ENCODE measurements at regions of chr2 and their contacts with region 1.

Region 1: DNA sequence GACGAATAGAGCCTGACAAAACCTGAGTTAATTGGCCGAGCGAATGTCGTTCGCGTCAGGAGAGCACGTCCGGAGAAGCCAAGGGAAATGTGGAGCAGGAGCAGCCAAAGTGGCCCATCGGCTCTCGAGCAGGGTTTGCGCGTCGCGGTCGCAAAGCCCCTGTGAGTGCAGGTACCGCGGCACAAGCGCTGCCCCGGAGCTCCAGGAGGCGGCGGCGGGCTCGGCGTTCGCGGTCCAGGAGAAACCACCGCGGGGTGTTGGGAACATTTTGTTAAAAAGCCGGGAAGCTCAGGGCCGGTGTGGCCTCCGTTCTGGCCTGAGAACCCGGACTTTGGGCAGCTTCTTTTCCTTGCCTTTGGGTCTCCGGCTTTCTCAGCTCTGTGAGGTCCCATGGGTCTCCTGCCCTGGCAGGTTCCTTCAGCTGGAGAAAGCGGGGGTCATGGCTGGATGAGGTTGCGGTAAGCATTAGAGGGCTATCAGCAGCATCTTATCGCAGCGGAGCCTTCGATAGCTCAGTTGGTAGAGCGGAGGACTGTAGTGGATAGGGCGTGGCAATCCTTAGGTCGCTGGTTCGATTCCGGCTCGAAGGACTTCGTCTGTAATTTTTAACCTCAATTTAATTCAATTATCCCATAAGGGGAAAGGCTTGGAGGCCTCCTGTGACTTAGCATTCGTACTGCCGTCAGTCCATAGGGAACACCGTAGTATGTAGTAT is 1.0 kb upstream of the AGBL5 start:
- DNase-seq: peak; percentile 93
- H3K4me3 ChIP-seq: peak overlapping the region; percentile 86 to 89
- H3K27ac ChIP-seq: peak overlapping the region; percentile 81 to 98
- H3K4me1 ChIP-seq: peaks cover 10 to 15% of the 10 kb centered on the region in 2 experiments; a peak in 2 of 4 replicates
- H3K27me3 ChIP-seq: no peaks in the 10 kb centered on the region
- CTCF ChIP-seq: peak; percentile 47
- EP300 ChIP-seq: peak in 1 of 2 experiments; percentile 76; a peak in 2 of 4 replicates
- RAD21 ChIP-seq: no peak; the same call in 1 of the 2 replicates

Region 2: DNA sequence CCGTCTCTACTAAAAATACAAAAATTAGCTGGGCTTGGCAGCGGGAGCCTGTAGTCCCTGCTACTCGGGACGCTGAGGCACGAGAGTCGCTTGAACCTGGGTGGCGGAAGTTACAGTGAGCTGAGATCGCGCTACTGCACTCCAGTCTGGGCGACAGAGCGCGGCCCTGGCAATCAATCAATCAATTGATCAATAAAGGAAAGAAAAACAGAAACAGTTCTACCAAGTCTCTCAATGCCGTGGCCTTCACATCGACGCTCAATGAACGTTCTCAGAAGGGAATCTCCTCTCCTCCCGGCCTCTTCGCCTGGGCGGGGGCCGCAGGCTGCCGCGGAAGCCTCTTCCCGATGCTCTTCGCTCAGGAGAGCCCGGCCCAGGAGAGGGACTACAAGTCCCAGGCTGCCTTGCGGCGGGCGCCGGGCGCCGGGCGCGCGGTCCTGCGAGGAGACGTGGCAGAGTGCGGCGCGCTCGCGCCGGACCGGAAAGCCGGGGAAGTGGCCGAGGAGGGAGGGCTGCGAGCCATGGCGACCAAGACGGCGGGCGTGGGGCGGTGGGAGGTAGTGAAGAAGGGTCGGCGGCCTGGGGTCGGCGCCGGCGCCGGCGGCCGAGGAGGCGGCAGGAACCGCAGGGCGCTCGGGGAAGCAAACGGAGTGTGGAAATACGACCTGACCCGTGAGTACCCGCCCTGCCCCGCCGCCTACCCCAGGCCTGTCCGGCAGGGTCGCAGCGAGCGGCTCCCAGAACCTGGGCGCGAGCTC is 17.8 kb before region 1 on chr2 and contains the start of gene TMEM214:
- CTCF ChIA-PET with region 1: interaction called, 6 read pairs
- POLR2A ChIA-PET with region 1: interaction called, 16 read pairs
- DNase-seq: peak; percentile 99
- H3K4me3 ChIP-seq: peak within 1 kb of the TSS; percentile 87 to 95
- H3K27ac ChIP-seq: peak within 1 kb of the TSS; percentile 54 to 75; a peak in 2 of 4 replicates
- H3K4me1 ChIP-seq: peaks cover 8 to 17% of the 10 kb centered on the region in 2 experiments; a peak in 3 of 4 replicates
- H3K27me3 ChIP-seq: no peaks in the 10 kb centered on the region
- CTCF ChIP-seq: no peak
- EP300 ChIP-seq: no peak
- RAD21 ChIP-seq: no peak
- polyA plus RNA-seq, gene TMEM214: 69.4 and 80.2 TPM in 2 replicates

Region 3: GRCh38 chr2:27065128-27065527 is 14.7 kb after region 1 on chr2:
- CTCF ChIA-PET with region 1: interaction called, 107 read pairs
- POLR2A ChIA-PET with region 1: interaction called, 80 read pairs
- DNase-seq: no peak
- H3K4me3 ChIP-seq: no peak overlapping the region
- H3K27ac ChIP-seq: no peak overlapping the region
- H3K4me1 ChIP-seq: peaks cover 12 to 25% of the 10 kb centered on the region in 2 experiments
- H3K27me3 ChIP-seq: no peaks in the 10 kb centered on the region
- CTCF ChIP-seq: no peak
- EP300 ChIP-seq: no peak
- RAD21 ChIP-seq: no peak

Region 4: DNA sequence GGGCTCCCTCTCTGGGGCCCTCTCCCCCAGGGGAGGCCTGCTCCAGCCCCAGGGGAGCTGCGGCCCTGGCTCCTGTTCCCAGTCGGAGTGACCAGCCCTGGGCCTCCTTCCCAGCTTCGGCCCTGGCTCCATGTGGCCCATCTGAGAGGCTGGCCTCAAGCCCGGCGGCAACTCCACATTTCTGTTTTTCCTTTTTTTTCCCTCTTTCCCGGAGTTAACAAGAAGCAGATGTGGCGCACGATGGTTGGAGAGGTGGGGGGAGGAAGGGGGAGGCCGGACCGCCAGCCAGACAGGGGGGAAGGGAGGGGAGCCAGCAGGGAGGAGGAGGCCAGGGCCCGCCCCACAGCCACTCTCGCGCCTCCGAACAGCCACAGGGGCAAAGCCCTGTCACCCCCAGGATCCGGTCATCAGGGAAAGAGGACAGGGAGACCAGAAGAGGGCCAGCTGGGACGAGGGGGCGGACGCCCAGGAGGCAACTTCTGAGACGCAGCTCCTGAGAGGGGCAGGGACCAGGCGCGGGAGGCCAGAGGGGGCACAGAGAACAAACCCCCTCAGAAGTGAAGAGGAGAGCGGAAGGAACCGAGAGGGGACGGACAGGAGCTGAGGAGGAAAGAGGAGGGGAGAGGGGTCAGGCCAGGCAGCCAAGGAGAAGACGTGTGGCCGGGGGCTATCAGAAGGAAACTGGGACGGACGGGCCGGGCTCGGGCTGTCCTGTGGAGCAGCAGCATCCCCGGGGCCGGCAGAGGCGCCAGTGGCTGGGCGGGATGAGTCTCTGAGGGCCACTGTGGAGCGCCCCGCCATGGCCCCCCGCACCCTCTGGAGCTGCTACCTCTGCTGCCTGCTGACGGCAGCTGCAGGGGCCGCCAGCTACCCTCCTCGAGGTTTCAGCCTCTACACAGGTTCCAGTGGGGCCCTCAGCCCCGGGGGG is 28.1 kb after region 1 on chr2 and contains the start of gene EMILIN1:
- CTCF ChIA-PET with region 1: interaction called, 216 read pairs
- POLR2A ChIA-PET with region 1: interaction called, 80 read pairs
- DNase-seq: peak; percentile 97
- H3K4me3 ChIP-seq: peak within 1 kb of the TSS; percentile 79 to 93
- H3K27ac ChIP-seq: peak within 1 kb of the TSS; percentile 79 to 99
- H3K4me1 ChIP-seq: peaks cover 36 to 76% of the 10 kb centered on the region in 2 experiments
- H3K27me3 ChIP-seq: no peaks in the 10 kb centered on the region
- CTCF ChIP-seq: peak; percentile 24
- EP300 ChIP-seq: peak; percentile 86 to 91; a peak in 3 of 4 replicates
- RAD21 ChIP-seq: peak; percentile 17
- polyA plus RNA-seq, gene EMILIN1: 184 and 286 TPM in 2 replicates

Region 5: DNA sequence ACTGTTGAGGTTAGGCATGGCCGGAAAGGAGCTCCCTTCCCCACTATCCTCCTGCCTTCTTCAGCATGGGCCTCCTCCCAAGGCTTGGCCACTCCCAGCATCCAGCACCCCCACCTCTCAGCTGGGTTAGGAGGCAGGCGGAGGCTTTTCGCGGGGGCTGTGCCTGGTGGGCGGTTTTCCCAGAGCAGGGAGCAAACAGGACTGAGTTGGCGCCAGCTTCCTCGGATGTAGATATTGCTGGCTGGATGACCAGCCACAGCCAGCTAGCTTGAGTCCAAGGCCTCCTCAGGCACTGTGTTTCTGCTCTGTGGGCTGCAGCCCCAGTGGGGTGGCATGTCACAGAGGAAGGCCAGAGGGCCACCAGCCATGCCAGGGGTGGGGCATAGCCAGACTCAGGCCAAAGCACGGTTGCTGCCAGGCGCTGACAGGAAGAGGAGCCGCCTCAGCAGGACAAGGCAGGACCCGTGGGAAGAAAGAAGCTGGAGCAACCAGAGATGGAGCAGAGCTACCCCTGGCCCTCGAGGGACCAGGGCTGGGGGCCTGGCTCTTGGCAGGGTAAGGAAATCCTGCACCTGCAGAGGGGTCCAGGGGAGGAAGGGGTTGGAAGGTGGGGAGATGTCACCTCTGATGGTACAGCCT is 98.5 kb after region 1 on chr2 and contains the start of gene TCF23:
- CTCF ChIA-PET with region 1: no interaction called
- POLR2A ChIA-PET with region 1: no interaction called
- DNase-seq: peak; percentile 31
- H3K4me3 ChIP-seq: no peak within 1 kb of the TSS
- H3K27ac ChIP-seq: no peak within 1 kb of the TSS
- H3K4me1 ChIP-seq: no peaks in the 10 kb centered on the region
- H3K27me3 ChIP-seq: peaks cover 4% of the 10 kb centered on the region
- CTCF ChIP-seq: no peak
- EP300 ChIP-seq: no peak
- RAD21 ChIP-seq: no peak
- polyA plus RNA-seq, gene TCF23: not detected in 2 replicates

Measured in SK-N-SH (cell line).